T-cell (primary cell): ENCODE measurements at regions of chr16 and their contacts with region 1.

Region 1: GRCh38 chr16:60648290-60648689 is 1387.9 kb downstream of the CDH8 start:
- DNase-seq: no peak
- ATAC-seq: no peak
- H3K4me3 ChIP-seq: no peak overlapping the region
- H3K4me3 Mint-ChIP-seq: no peak overlapping the region
- H3K27ac ChIP-seq: no peak overlapping the region
- H3K27ac Mint-ChIP-seq: no peak overlapping the region
- H3K4me1 ChIP-seq: no peaks in the 10 kb centered on the region
- H3K4me1 Mint-ChIP-seq: no peaks in the 10 kb centered on the region
- H3K27me3 ChIP-seq: no peaks in the 10 kb centered on the region
- H3K27me3 Mint-ChIP-seq: no peaks in the 10 kb centered on the region

Region 2: GRCh38 chr16:61098505-61098904 is 450.2 kb after region 1 on chr16:
- CTCF ChIA-PET with region 1: no interaction called
- POLR2A ChIA-PET with region 1: interaction called in 1 of 2 experiments, 13 read pairs
- DNase-seq: no peak
- ATAC-seq: no peak
- H3K4me3 ChIP-seq: no peak overlapping the region
- H3K4me3 Mint-ChIP-seq: no peak overlapping the region
- H3K27ac ChIP-seq: no peak overlapping the region
- H3K27ac Mint-ChIP-seq: no peak overlapping the region
- H3K4me1 ChIP-seq: no peaks in the 10 kb centered on the region
- H3K4me1 Mint-ChIP-seq: no peaks in the 10 kb centered on the region
- H3K27me3 ChIP-seq: no peaks in the 10 kb centered on the region
- H3K27me3 Mint-ChIP-seq: no peaks in the 10 kb centered on the region